ENCODE measurements at regions of chr1 and their contacts with region 1.

Region 1: GRCh38 chr1:86380257-86380861 is 15.8 kb downstream of the ODF2L start:
- DNase-seq: no peak
- ATAC-seq: peak in 3 of 4 donors; percentile 54 to 72 (median 67)
- H3K4me3 ChIP-seq: peak overlapping the region in 7 of 12 donors; percentile 1 to 45 (median 13)
- H3K27ac ChIP-seq: no peak overlapping the region
- H3K4me1 ChIP-seq: peaks cover 0 to 21% (median 3%) of the 10 kb centered on the region in 12 donors
- H3K27me3 ChIP-seq: no peaks in the 10 kb centered on the region
- CTCF ChIP-seq: peak; percentile 69 to 90 (median 82)
- POLR2A ChIP-seq: no peak

Region 2: GRCh38 chr1:86345042-86345441 is 35.3 kb before region 1 on chr1:
- intact Hi-C with region 1: no loop called
- DNase-seq: no peak
- ATAC-seq: no peak
- H3K4me3 ChIP-seq: no peak overlapping the region
- H3K27ac ChIP-seq: no peak overlapping the region
- H3K4me1 ChIP-seq: no peaks in the 10 kb centered on the region
- H3K27me3 ChIP-seq: no peaks in the 10 kb centered on the region
- CTCF ChIP-seq: no peak
- POLR2A ChIP-seq: no peak

Region 3: GRCh38 chr1:86429835-86430234 is 49.5 kb after region 1 on chr1:
- intact Hi-C with region 1: no loop called
- DNase-seq: peak in 4 of 5 donors; percentile 41 to 53 (median 48)
- ATAC-seq: peak; percentile 89 to 99 (median 98)
- H3K4me3 ChIP-seq: no peak overlapping the region
- H3K27ac ChIP-seq: peak overlapping the region in 11 of 12 donors; percentile 3 to 86 (median 72)
- H3K4me1 ChIP-seq: peaks cover 0 to 31% (median 12%) of the 10 kb centered on the region in 12 donors
- H3K27me3 ChIP-seq: no peaks in the 10 kb centered on the region
- CTCF ChIP-seq: no peak
- POLR2A ChIP-seq: no peak

Region 4: DNA sequence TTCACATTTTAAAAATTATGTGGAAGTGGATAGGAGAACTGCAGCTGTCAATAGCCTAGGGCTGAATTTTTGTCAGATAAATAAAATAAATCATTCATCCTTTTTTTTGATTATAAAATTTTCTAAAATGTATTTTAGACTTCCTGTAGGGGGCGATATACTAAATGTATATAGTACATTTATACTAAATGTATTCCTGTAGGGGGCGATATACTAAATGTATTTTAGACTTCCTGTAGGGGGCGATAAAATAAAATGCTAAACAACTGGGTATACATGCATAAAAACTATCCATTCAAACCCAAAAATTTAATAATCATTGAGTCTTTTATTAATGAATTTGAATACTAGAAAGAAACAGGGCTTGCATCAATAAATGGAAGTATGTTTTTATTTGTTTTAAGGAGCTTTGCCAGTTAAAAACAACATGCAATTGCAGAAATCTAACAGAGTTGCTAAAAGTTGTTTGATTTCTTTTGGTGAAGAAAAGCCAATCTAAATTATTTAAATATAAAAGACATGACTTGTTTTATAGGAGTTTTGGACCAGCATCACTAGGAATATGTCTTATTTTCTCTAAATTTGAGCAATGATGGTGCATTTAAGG is 119.7 kb after region 1 on chr1:
- intact Hi-C with region 1: loop called in 9 of 10 experiments (anchors 2 to 10 kb)
- DNase-seq: no peak
- ATAC-seq: no peak
- H3K4me3 ChIP-seq: no peak overlapping the region
- H3K27ac ChIP-seq: peak overlapping the region in 6 of 12 donors; percentile 10 to 94 (median 41)
- H3K4me1 ChIP-seq: peaks cover 0 to 37% (median 16%) of the 10 kb centered on the region in 12 donors
- H3K27me3 ChIP-seq: no peaks in the 10 kb centered on the region
- CTCF ChIP-seq: peak; percentile 73 to 99 (median 89)
- POLR2A ChIP-seq: no peak

Region 5: DNA sequence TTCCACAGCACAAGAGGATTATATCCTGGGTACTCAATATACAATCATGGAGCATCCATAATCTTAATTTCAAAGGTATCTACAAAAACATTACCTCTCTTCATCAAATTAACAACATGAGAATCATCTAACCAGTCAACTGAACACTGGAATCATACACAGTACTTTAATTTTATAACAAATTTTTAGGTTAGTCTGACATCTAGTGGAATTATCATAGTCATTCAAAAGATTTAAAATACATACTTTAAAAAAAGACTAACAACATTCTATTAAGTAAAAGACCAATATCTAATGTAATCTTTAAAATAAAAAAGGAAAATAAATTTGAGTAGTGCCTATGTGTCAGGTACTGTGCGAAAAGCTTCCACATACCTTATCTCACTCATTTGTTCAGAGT is 307.2 kb after region 1 on chr1:
- intact Hi-C with region 1: loop called in 2 of 10 experiments (anchors 5 kb)
- DNase-seq: no peak
- ATAC-seq: no peak
- H3K4me3 ChIP-seq: no peak overlapping the region
- H3K27ac ChIP-seq: no peak overlapping the region
- H3K4me1 ChIP-seq: no peaks in the 10 kb centered on the region
- H3K27me3 ChIP-seq: no peaks in the 10 kb centered on the region
- CTCF ChIP-seq: peak in 7 of 12 donors; percentile 6 to 42 (median 25)
- POLR2A ChIP-seq: no peak

Region 6: GRCh38 chr1:86741947-86742572 is 361.7 kb after region 1 on chr1:
- intact Hi-C with region 1: loop called in 2 of 10 experiments (anchors 5 kb)
- DNase-seq: peak in 1 of 5 donors; percentile 32
- ATAC-seq: no peak
- H3K4me3 ChIP-seq: no peak overlapping the region
- H3K27ac ChIP-seq: no peak overlapping the region
- H3K4me1 ChIP-seq: peaks cover 0 to 25% (median 8%) of the 10 kb centered on the region in 12 donors
- H3K27me3 ChIP-seq: no peaks in the 10 kb centered on the region
- CTCF ChIP-seq: peak; percentile 55 to 77 (median 67)
- POLR2A ChIP-seq: no peak

Region 7: GRCh38 chr1:87084244-87084836 is 704.0 kb after region 1 on chr1:
- intact Hi-C with region 1: loop called in 2 of 10 experiments (anchors 10 kb)
- DNase-seq: no peak
- ATAC-seq: peak in 1 of 4 donors; percentile 42
- H3K4me3 ChIP-seq: no peak overlapping the region
- H3K27ac ChIP-seq: no peak overlapping the region
- H3K4me1 ChIP-seq: peaks cover 0 to 8% (median 4%) of the 10 kb centered on the region in 12 donors
- H3K27me3 ChIP-seq: no peaks in the 10 kb centered on the region
- CTCF ChIP-seq: peak; percentile 57 to 85 (median 72)
- POLR2A ChIP-seq: no peak

Measured in heart left ventricle (tissue), 16 donors.